ENCODE measurements at regions of chr12 and their contacts with region 1.

Region 1: DNA sequence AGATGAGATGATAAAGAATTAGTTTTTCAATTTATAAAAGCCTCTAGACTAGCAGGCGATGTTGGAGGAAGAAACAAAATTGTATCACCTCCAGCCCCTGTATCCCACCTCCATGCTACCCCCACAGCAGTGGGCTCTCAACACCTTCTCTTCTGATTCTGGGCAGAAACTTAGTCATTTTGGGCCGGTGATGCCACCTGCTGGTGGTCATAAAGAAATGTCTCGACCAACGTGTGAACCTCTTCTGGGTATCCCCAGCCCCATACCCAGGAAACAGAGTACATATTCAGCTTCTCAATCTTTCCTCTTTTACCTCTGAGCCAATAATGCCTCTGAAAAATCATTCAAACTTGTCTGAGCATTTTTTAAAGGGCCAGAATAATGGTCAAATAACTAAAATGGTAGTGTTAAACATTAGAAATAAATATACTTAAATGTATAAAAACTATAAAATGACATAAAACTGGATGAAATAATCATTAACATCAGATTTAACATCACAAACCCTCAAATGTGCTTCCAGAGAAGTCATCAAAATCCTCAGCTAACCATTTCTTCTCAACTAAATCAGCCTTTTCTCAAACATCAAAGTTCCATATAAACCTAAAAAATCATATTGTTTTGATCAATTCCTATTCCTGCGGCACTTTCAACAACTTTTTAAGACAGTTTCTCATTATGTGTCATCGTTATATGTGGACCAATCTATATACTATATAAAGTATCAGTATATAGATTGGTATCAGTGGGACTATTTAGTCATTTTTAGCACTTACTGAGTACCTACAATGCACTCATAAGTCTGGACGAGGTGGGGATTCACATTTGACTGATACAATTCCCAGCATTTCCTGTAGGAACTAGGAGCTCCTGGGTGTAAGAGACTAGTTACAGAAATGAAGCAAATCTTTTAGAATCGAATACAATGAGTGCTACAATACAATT is 69.4 kb downstream of the ATXN2 start:
- DNase-seq: peak in 6 of 10 donors; percentile 26 to 53 (median 45)
- H3K4me3 ChIP-seq: no peak overlapping the region
- H3K27ac ChIP-seq: peak overlapping the region in 2 of 59 donors; percentile 21 to 44
- H3K27me3 ChIP-seq: no peaks in the 10 kb centered on the region
- CTCF ChIP-seq: peak; percentile 51 to 85 (median 73)

Region 2: DNA sequence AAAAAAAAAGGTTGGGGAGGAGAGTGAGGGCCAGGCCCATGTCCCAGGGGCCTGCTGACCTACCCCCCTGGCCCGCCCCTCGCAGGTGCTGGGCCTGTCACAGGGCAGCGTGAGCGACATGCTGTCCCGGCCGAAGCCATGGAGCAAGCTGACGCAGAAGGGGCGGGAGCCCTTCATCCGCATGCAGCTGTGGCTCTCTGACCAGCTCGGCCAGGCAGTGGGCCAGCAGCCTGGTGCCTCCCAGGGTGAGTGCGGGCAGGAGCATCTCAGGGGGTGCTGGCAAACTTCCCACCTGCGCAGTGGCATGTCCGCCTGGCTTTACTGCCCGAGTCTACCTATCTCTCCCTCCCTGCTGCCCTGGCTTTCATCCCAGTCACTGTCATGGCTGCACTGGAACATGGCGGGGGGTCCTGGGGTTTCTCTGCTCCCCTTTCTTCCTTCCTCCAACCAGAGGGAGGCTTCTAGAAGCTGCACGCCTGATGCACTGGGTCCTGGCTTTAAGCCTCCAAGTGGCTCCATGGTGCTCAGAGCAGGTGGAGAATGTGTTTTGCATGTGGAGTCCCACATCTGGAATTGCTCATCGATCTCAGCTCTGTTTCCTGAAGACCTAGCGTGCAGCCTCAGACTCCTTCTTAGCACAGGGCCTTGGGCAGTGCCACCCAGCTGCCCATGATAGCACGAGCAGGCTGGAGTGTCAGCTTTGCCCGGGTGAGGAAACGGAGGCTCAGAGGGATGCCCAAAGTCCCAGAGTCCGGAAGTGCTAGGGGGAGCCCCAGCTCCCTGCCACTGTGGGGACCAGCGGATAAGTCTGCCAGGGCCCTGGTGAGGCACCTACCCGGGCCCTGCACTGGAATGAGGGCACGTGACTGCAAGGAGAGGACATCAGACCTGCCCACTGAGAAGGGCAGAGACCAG is 207.1 kb before region 1 on chr12:
- intact Hi-C with region 1: no loop called
- DNase-seq: peak in 9 of 10 donors; percentile 33 to 70 (median 57)
- H3K4me3 ChIP-seq: peak overlapping the region in 12 of 59 donors; percentile 6 to 53 (median 16)
- H3K27ac ChIP-seq: peak overlapping the region in 3 of 59 donors; percentile 1 to 21 (median 4)
- H3K27me3 ChIP-seq: no peaks in the 10 kb centered on the region
- CTCF ChIP-seq: no peak

Region 3: GRCh38 chr12:111673503-111673902 is 143.8 kb after region 1 on chr12:
- intact Hi-C with region 1: loop called (anchors 2 to 10 kb)
- DNase-seq: no peak
- H3K4me3 ChIP-seq: no peak overlapping the region
- H3K27ac ChIP-seq: peak overlapping the region in 9 of 59 donors; percentile 9 to 50 (median 27)
- H3K27me3 ChIP-seq: no peaks in the 10 kb centered on the region
- CTCF ChIP-seq: peak in 52 of 56 donors; percentile 11 to 69 (median 44)